Posterior vena cava (tissue), 2 donors: ENCODE measurements at regions of chr22 and their contacts with region 1.

Region 1: DNA sequence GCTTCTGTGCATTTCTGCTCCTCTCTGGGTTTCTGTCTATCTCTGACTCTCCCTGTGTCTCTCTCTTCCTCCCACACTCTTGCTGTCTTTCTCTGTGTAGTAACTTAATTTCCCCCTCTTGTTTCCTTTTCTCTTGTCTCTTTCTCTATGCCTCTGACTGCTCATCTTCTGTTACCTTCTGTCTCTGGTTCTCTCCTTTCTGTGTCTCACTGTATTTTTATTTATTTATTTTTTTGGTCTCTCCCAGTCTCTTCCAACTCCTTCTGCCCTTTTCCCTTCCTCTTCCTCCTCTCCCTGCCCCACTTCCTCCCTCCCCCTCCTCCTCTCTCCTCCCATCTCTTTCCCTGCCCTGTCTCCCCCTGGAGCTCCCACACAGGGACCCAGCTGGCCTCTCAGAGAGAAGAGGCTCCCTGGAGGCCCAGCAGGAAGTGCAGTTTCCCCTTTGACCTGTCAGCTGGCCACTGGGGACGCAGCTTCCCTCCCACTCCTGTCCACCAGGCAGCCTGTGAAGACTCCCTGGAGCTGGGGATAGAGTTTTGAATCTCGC is 38.3 kb upstream of the MYH9 start:
- DNase-seq: no peak

Region 2: GRCh38 chr22:35498026-35498800 is 927.8 kb before region 1 on chr22:
- intact Hi-C with region 1: no loop called
- DNase-seq: no peak

Region 3: DNA sequence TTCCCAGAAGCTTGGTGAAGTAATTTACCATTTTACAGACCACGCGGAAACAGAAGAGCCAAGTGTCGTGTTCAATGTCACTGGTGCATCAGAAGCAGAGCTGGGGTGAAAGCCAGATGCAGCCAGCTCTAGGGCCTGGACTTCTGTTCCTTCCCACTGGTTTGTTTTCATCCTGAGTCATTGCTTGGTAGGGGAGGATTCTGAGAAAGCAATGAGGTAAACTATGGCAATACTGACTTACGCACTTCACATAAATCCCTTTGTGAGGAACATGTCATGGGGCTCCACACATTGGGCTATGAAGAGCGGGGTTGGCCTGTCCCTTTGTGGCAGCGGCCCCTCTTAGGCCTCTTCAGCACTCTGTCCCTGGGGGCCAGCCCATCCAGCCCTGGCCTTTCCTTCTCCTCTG is 345.0 kb before region 1 on chr22:
- intact Hi-C with region 1: loop called in 1 of 2 experiments (anchors 5 kb)
- DNase-seq: peak; percentile 87

Region 4: DNA sequence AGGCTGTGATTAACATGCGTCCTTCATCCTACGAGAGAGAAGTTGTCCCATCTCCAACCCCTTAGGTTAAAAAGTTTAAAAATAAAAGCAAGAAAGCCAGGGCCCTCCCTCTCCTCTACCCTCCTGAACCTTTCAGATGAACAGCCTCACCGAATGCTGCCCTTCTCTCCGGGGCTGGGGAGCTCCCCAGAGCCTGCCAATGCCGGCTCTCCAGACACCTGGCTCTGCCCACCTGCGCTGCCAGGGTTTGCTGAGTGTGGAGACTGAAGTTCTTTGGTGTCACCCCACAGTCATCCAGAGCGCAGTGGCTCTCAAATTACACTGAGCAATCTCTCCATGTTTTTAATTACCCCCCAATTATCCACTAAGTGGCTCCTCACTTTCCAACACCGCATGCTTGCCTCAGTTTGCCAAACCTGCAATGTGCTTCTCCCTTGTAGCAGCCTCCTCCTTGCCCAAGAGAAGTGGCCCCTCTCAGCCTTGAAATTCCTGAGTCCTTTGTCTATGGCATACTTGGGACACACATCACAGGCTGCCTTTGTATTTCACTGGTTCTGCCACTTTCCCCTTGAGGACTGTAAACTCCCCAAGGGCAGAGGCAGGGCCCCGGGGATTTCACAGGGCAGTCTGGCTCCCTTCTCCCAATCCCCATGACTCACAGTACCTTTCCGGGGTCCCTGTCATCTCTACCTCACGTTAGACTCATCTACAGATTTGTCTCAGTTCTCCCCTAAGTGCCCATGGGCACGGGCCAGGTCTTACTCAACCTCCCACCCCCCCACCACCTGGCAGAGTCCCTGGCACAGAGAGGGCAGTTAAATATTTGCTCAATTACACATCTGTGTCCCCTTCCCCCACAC is 40.3 kb before region 1 on chr22:
- intact Hi-C with region 1: no loop called
- DNase-seq: no peak

Region 5: GRCh38 chr22:36439481-36440271 is 13.6 kb after region 1 on chr22:
- intact Hi-C with region 1: loop called in 1 of 2 experiments (anchors 1 kb)
- DNase-seq: peak; percentile 89